ENCODE measurements at regions of chr19 and their contacts with region 1.

Region 1: DNA sequence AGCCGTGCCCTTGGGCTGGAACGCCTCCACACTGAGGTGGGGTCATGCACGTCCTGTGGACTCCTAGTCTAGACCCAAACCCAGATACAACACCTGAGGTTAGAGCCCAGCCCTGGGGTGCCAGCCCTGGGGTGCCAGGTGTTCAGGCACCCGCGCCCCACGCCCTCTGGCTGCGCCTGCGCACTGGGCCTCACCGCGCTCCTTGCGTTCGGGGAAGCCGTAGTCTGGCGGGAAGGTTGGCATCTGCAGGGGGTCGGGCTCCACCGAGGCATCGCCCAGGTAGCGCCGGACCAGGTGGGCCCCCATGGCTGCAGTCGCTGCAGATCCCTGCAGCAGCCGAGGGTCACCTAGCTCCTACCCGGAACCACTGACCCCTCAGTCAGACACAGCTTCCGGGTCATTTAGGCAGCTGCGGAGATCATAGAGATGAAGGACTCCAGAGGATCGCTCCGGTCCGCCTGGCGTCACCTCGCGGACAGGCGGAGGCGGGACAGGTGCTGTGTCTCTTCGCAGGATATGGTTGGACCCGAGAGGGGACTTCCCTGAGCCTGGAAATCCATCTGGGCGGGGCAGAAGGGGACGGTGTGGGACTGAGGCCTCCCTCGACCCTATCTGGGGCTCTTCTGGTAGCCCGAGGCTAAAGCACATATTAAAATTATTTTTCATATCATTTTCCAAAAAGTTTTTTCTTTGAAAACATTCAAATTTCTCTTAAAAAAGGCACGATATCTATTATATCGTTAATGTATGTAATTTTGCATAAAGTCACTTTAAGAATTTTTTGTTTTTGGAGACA is at the start of gene NDUFB7:
- DNase-seq: peak; percentile 92
- CTCF ChIP-seq: peak; percentile 97

Region 2: GRCh38 chr19:14366498-14366915 is 205.4 kb before region 1 on chr19:
- in situ Hi-C with region 1: no loop called
- DNase-seq: peak; percentile 70
- CTCF ChIP-seq: no peak

Region 3: GRCh38 chr19:14689598-14690503 is 118.0 kb after region 1 on chr19 and contains the start of gene ZNF333:
- in situ Hi-C with region 1: loop called (anchors 5 kb)
- DNase-seq: peak; percentile 98
- CTCF ChIP-seq: no peak

Region 4: GRCh38 chr19:14775869-14776586 is 204.1 kb after region 1 on chr19:
- in situ Hi-C with region 1: loop called (anchors 10 kb)
- DNase-seq: peak; percentile 56
- CTCF ChIP-seq: no peak

Region 5: DNA sequence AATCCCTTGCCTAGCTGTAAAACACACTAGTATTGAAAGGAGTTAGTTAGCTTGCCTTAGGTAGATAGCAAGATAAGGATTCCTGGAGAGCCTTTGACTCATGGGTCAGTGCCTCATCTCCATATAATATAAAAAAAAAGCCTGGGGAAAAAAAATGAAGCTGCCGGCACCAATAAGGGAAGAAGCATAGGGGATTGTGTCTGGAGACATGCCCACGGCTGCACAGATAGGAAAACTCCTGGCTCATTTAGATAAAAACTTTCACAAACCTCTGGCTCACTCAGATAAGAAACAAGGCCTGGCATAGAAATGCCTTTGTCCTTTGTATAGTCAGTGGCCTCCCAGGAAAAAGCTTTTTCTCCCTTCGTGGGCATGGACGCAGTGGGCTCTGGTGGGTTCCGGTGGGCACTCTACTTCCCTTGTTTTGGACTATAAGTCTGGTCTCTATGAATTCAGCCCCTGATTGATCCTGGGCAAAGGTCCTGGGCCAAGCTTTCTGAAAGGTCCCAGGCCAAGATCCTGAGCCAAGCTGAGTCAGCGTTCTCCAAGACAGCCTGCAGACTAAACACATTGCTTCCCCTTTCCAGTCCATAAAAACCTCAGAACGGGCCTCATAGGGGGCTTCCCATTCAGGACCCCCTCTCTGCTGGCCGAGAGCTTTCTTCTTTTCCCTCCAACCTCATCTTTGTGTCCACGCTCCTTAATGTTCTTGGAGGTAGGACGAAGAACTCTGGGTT is 318.9 kb after region 1 on chr19:
- in situ Hi-C with region 1: loop called (anchors 25 kb)
- DNase-seq: no peak
- CTCF ChIP-seq: no peak

Region 6: DNA sequence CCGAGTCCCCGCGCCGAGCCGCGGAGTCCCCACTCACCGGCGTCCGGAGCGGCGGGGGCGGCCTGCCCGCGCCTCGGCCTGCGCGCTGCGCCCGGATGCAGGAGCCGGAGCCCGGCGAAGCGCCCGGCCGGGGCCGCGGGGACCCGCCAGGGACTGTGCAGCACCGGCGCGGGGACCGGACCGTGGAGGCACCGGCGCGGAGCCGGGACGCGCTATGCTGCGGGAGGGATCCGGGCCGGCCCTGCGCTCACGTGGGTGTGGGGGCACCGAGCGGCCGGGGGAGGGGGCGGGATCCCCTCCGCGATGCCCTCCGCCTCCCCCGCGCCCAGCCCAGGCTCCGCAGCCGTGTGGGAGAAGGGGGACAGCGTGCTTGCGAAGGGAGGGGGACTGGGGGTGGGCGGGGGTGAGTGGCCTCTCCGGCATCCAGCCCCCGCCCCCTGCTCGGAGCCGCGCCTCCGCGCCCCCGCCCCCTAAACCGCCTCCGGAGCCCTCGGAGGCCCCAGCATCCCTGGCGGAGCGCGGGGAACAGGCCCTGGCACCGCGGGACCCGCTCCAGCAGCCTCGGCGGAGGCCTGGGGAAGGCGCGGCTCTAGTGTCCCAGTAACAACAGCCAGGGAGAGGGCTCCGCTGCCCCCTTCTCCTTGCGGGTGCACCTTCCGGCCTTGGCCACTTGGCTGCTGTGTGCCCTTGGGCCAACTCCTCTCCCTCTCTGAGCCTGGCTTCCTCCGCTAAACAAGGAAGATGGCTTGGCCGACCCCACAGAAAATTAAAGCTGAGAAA is 407.8 kb after region 1 on chr19 and contains the start of gene SLC1A6:
- in situ Hi-C with region 1: no loop called
- DNase-seq: peak; percentile 41
- CTCF ChIP-seq: no peak

Region 7: DNA sequence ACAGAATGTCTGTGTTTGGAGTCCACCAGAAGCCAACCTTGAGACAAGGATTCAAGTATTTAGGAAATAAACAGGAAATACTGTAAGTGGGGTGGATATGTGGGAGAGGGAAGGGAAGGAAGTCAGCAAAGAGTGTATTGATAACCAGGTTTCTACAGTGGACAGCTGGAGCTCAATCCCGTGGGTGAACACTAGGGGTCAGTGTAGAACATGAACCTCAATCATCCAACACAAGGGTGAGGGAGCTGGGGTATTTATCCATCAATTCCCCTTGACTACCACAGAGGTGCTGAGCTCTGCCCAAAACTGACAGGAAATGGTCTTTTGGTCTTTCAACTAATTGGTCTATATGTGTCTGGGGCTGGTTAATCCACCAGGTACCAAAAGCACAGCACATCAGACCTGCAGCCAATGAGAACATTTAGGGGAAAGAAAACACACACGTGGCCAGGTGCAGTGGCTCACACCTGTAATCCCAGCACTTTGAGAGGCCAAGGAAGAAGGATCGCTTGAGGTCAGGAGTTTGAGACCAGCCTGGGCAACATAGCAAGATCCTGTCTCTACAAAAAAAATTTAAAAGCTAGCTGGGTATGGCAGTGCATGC is 529.7 kb after region 1 on chr19:
- in situ Hi-C with region 1: loop called (anchors 25 kb)
- DNase-seq: peak; percentile 54
- CTCF ChIP-seq: peak; percentile 48